OCI-LY7 (cell line): ENCODE measurements at regions of chrX and their contacts with region 1.

Region 1: GRCh38 chrX:14029425-14030173 is at the start of gene GEMIN8:
- DNase-seq: peak; percentile 88
- H3K4me3 ChIP-seq: peak within 1 kb of the TSS; percentile 90
- H3K27ac ChIP-seq: peak within 1 kb of the TSS; percentile 74
- H3K4me1 ChIP-seq: peaks cover 36% of the 10 kb centered on the region
- CTCF ChIP-seq: no peak
- total RNA-seq, gene GEMIN8: 23.2 and 30.1 TPM in 2 replicates

Region 2: GRCh38 chrX:13515211-13515930 is 514.2 kb before region 1 on chrX:
- CTCF ChIA-PET with region 1: no interaction called
- POLR2A ChIA-PET with region 1: no interaction called
- intact Hi-C with region 1: no loop called
- DNase-seq: no peak
- H3K4me3 ChIP-seq: no peak overlapping the region
- H3K27ac ChIP-seq: no peak overlapping the region
- H3K4me1 ChIP-seq: no peaks in the 10 kb centered on the region
- CTCF ChIP-seq: no peak

Region 3: GRCh38 chrX:13653022-13653693 is 376.4 kb before region 1 on chrX and contains the start of gene TCEANC:
- CTCF ChIA-PET with region 1: no interaction called
- POLR2A ChIA-PET with region 1: no interaction called
- intact Hi-C with region 1: loop called (anchors 2 kb)
- DNase-seq: peak; percentile 94
- H3K4me3 ChIP-seq: peak within 1 kb of the TSS; percentile 80
- H3K27ac ChIP-seq: peak within 1 kb of the TSS; percentile 84
- H3K4me1 ChIP-seq: peaks cover 20% of the 10 kb centered on the region
- CTCF ChIP-seq: no peak
- total RNA-seq, gene TCEANC: 4.5 and 6.0 TPM in 2 replicates

Region 4: DNA sequence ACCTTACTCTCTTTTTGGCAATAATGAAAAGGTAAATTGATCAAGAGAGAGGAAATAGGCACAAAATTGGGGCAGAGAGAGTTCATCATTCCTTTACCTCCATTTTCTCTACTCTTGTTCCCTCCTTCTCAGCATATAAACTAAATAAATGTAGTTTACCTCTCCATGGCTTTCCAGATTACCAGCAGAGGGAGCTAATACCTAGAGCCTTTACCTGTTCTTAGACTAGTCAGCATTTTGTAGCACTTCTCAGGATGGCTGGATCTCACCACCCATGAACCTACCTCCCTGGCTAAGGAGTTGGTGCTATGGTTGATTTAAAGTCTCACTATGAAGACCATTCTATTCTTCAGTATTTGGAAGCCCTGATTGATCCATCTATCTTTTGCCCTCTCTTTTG is 279.4 kb before region 1 on chrX:
- CTCF ChIA-PET with region 1: interaction called, 3 read pairs
- POLR2A ChIA-PET with region 1: interaction called, 3 read pairs
- intact Hi-C with region 1: loop called (anchors 1 kb)
- DNase-seq: peak; percentile 64
- H3K4me3 ChIP-seq: no peak overlapping the region
- H3K27ac ChIP-seq: peak overlapping the region; percentile 57
- H3K4me1 ChIP-seq: peaks cover 51% of the 10 kb centered on the region
- CTCF ChIP-seq: peak; percentile 79

Region 5: DNA sequence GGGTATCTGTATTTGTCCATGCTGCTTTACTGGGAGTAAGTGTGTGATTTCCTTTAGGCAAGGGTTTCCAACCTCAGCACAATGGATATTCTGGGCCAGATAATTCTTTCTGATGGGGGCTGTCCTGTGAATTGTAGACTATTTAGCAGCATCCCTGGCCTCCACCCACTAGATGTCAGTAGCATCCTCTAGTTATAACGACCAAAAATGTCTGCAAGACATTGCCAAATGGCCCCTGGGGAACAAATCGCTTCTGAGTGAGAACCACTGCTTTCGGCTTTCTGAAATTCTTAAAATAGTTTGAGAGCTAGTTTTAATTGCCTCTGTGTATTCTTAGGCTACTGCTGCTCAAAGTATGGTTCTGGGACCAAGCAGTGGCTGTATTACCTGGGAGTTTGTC is 131.5 kb before region 1 on chrX:
- CTCF ChIA-PET with region 1: no interaction called
- POLR2A ChIA-PET with region 1: interaction called, 4 read pairs
- intact Hi-C with region 1: loop called (anchors 1 kb)
- DNase-seq: peak; percentile 34
- H3K4me3 ChIP-seq: no peak overlapping the region
- H3K27ac ChIP-seq: no peak overlapping the region
- H3K4me1 ChIP-seq: no peaks in the 10 kb centered on the region
- CTCF ChIP-seq: peak; percentile 67

Region 6: DNA sequence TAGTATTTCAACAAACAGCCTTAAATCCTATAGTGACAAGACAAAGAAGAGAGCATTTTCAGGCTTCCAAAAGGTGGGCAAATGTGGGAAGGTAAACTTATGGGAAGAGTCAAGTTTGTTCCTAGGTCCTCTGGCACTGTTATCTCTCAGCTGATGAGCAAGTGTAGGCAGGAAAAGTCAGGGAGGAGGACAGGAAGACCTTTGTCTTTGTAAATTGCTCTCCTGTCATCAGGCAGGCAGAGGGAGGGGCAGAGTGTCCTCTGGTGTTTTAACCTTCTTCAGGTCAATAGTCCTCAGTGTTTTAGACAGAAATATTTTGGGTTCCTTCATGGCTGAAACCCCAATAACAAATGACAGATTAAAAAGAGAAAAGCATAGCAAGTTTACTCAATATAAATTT is 13.6 kb after region 1 on chrX:
- CTCF ChIA-PET with region 1: no interaction called
- POLR2A ChIA-PET with region 1: no interaction called
- intact Hi-C with region 1: no loop called
- DNase-seq: no peak
- H3K4me3 ChIP-seq: no peak overlapping the region
- H3K27ac ChIP-seq: no peak overlapping the region
- H3K4me1 ChIP-seq: no peaks in the 10 kb centered on the region
- CTCF ChIP-seq: no peak